ENCODE measurements at regions of chr4 and their contacts with region 1.

Region 1: DNA sequence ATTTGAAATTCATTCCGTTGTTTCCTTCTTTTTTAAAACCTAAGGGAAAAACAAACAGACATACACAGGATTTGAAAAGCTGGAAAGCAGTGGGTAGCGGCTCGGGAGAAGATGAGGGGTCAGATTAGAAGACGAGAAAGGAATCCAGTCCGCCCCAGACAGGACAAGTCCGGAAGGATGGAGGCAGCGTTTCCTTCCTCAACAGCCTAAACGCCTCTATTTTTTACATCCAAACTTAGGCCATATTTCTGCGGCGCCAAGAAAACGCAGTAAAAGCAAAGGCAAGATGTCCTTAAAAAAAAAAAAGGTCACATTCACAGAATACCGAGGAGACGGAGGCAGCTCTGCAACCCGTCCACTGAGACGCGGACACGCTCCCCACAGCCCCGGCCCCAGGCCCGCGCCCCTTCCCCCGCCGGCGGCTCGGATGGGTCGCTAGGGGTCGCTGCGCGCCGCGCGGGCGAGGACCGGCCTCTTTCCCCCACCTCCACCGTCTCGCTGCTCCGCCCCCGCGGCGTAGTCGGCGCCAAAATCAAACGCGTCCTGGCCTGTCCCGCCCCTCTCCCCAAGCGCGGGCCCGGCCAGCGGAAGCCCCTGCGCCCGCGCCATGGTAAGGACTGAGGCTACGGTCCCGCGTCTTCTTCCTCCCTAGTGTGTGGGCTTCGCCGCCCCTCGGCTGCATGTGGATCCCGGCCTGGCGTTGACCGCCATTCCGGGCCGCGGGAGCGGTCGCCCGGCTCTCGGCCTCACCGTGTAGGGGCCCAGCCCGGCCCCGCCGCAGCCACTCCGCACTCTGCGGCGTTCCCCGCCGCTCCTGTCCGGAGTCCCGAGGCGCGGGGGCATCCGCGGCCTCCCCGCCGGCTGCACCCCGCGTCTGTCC is at the start of gene MND1:
- DNase-seq: peak; percentile 82 to 91 (median 88)
- H3K4me3 ChIP-seq: peak within 1 kb of the TSS; percentile 68
- H3K27ac ChIP-seq: no peak within 1 kb of the TSS
- H3K4me1 ChIP-seq: no peaks in the 10 kb centered on the region
- H3K27me3 ChIP-seq: no peaks in the 10 kb centered on the region
- CTCF ChIP-seq: peak; percentile 76 to 99 (median 78)
- EP300 ChIP-seq: no peak
- POLR2A ChIP-seq: no peak
- total RNA-seq, gene MND1: 0.28 to 0.67 (median 0.36) TPM in 3 of 7 donors, not detected in the others

Region 2: DNA sequence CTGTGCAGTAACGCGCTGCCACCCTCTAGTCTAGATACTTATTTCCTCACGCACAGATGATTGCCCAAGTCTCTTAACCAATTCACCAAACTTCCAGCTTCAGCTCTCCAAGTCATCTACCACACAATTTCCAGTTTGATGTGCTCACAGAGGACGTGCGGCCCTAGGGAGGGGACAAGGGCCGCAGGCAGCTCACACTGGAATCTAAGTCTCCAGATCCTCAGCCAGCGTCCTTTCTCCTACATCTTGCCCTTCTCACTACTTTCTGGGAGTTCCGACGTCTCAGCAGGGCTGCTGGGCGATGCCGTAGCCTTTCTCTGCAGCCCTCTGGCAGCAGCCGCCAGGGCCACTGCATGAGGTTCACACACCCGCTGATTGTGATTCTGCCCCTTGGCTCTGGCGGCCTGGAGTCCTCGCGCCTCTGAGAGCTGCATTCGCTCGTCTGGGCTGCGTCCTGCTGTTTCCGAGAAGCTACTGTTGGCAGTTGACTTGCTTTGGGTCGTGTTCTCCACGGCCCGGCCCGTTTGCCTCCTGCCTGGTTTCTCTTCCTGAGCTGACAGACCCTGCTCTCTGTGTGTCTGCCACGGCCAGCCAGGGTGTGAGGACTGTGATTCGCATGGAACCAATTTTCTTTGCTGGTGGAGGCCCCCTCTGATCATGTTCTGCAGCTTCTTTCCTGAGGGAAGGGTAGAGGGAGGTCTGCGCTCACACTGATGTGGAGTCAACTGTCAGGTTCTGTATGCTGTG is 107.7 kb after region 1 on chr4:
- intact Hi-C with region 1: loop called in 1 of 4 experiments (anchors 10 kb)
- DNase-seq: no peak
- H3K4me3 ChIP-seq: no peak overlapping the region
- H3K27ac ChIP-seq: no peak overlapping the region
- H3K4me1 ChIP-seq: peaks cover 2% of the 10 kb centered on the region
- H3K27me3 ChIP-seq: no peaks in the 10 kb centered on the region
- CTCF ChIP-seq: no peak
- EP300 ChIP-seq: no peak
- POLR2A ChIP-seq: no peak

Region 3: GRCh38 chr4:153573881-153574802 is 229.8 kb after region 1 on chr4:
- intact Hi-C with region 1: loop called (anchors 2 to 5 kb)
- DNase-seq: peak; percentile 41 to 68 (median 59)
- H3K4me3 ChIP-seq: no peak overlapping the region
- H3K27ac ChIP-seq: no peak overlapping the region
- H3K4me1 ChIP-seq: peaks cover 6% of the 10 kb centered on the region
- H3K27me3 ChIP-seq: no peaks in the 10 kb centered on the region
- CTCF ChIP-seq: peak in 2 of 3 donors; percentile 44
- EP300 ChIP-seq: no peak
- POLR2A ChIP-seq: no peak